ENCODE measurements at regions of chr14 and their contacts with region 1.

Region 1: GRCh38 chr14:21917699-21918436 is 244.2 kb upstream of the OR4E1 start:
- DNase-seq: peak; percentile 91
- H3K4me3 ChIP-seq: no peak overlapping the region
- H3K27ac ChIP-seq: peak overlapping the region; percentile 86
- H3K4me1 ChIP-seq: peaks cover 60% of the 10 kb centered on the region
- H3K27me3 ChIP-seq: no peaks in the 10 kb centered on the region
- CTCF ChIP-seq: peak; percentile 66 to 69
- POLR2A ChIP-seq: peak; percentile 16

Region 2: DNA sequence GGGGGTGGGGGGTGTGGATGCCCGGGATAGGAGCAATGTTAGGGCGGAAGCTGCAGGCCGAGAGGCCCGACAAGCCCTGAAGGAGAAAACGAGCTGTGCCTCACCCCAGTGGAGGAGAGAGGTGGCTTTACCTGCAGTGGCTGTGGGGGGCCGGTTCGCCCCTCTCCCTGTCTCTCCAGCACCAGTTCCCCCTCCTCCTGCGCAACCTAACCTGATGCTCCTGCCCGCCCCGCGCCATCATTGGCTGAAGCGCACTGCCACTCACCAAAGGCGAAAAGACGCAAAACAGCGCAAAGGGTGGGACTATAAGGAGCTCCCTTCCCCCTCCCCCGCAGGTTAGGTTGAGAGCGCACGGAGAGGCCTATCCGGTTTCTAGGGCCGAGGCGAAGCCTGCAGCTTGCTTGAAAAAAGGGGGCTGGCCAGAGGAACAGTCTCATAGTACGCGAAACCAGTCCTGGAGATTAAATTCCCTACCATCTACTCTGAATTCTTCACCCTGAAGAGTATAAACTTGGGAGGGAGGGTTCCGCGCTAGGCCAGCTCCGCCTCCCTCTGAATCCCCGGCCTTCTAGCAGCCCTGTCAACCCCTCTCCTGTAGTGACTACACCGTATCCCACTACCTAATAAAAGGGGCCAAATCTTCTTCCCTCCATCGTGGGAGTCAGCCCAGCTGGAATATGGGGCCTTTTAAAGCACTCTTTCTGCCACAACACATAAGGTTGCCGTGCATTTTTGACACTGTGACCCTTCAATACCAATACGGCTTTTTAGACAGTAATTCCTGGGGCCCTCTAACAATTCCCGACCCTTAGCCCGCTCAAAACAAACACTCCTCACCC is 480.6 kb before region 1 on chr14:
- CTCF ChIA-PET with region 1: no interaction called
- POLR2A ChIA-PET with region 1: no interaction called
- dilution Hi-C with region 1: no loop called
- intact Hi-C with region 1: no loop called
- DNase-seq: peak; percentile 98
- H3K4me3 ChIP-seq: peak overlapping the region; percentile 52 to 97 (median 92)
- H3K27ac ChIP-seq: peak overlapping the region; percentile 68
- H3K4me1 ChIP-seq: peaks cover 15% of the 10 kb centered on the region
- H3K27me3 ChIP-seq: no peaks in the 10 kb centered on the region
- CTCF ChIP-seq: no peak
- POLR2A ChIP-seq: peak; percentile 85

Region 3: DNA sequence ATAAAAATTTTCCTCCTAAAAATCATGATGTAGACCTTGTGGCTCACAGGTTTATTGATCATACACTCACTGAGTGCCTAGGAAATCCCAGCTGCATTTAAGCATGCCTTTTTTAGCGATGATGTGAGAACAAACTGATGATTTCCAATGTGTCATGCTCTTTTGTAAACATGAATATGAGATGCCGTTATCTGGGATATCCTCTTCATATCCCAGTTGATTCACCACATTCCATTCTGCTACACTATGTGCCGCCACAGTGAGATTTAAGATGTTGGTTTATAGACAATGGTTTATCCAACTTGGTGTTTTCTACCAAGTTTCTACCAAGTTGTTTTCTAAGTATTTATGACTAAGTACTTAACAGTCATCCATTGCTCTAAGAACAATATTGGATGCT is 249.5 kb before region 1 on chr14:
- CTCF ChIA-PET with region 1: no interaction called
- POLR2A ChIA-PET with region 1: no interaction called
- dilution Hi-C with region 1: no loop called
- intact Hi-C with region 1: no loop called
- DNase-seq: peak; percentile 64
- H3K4me3 ChIP-seq: no peak overlapping the region
- H3K27ac ChIP-seq: peak overlapping the region; percentile 13
- H3K4me1 ChIP-seq: peaks cover 10% of the 10 kb centered on the region
- H3K27me3 ChIP-seq: no peaks in the 10 kb centered on the region
- CTCF ChIP-seq: no peak
- POLR2A ChIP-seq: no peak

Region 4: GRCh38 chr14:21833836-21834235 is 84.0 kb before region 1 on chr14:
- CTCF ChIA-PET with region 1: no interaction called
- POLR2A ChIA-PET with region 1: no interaction called
- dilution Hi-C with region 1: no loop called
- intact Hi-C with region 1: no loop called
- DNase-seq: no peak
- H3K4me3 ChIP-seq: no peak overlapping the region
- H3K27ac ChIP-seq: no peak overlapping the region
- H3K4me1 ChIP-seq: no peaks in the 10 kb centered on the region
- H3K27me3 ChIP-seq: peaks cover 10 to 29% of the 10 kb centered on the region in 2 experiments
- CTCF ChIP-seq: no peak
- POLR2A ChIP-seq: no peak

Region 5: GRCh38 chr14:21852061-21852664 is 65.7 kb before region 1 on chr14:
- CTCF ChIA-PET with region 1: interaction called, 41 read pairs
- POLR2A ChIA-PET with region 1: no interaction called
- dilution Hi-C with region 1: no loop called
- intact Hi-C with region 1: no loop called
- DNase-seq: peak; percentile 58
- H3K4me3 ChIP-seq: no peak overlapping the region
- H3K27ac ChIP-seq: no peak overlapping the region
- H3K4me1 ChIP-seq: no peaks in the 10 kb centered on the region
- H3K27me3 ChIP-seq: peaks cover 20 to 37% of the 10 kb centered on the region in 2 experiments
- CTCF ChIP-seq: peak; percentile 76 to 86
- POLR2A ChIP-seq: no peak

Region 6: GRCh38 chr14:21882226-21882625 is 35.6 kb before region 1 on chr14:
- CTCF ChIA-PET with region 1: interaction called, 27 read pairs
- POLR2A ChIA-PET with region 1: no interaction called
- dilution Hi-C with region 1: no loop called
- intact Hi-C with region 1: no loop called
- DNase-seq: no peak
- H3K4me3 ChIP-seq: no peak overlapping the region
- H3K27ac ChIP-seq: no peak overlapping the region
- H3K4me1 ChIP-seq: peaks cover 6% of the 10 kb centered on the region
- H3K27me3 ChIP-seq: no peaks in the 10 kb centered on the region
- CTCF ChIP-seq: no peak
- POLR2A ChIP-seq: no peak

Region 7: GRCh38 chr14:21978184-21978998 is 60.5 kb after region 1 on chr14:
- CTCF ChIA-PET with region 1: interaction called, 74 read pairs
- POLR2A ChIA-PET with region 1: no interaction called
- dilution Hi-C with region 1: no loop called
- intact Hi-C with region 1: loop called (anchors 2 kb)
- DNase-seq: peak; percentile 41
- H3K4me3 ChIP-seq: no peak overlapping the region
- H3K27ac ChIP-seq: no peak overlapping the region
- H3K4me1 ChIP-seq: no peaks in the 10 kb centered on the region
- H3K27me3 ChIP-seq: peaks cover 7 to 10% of the 10 kb centered on the region in 2 experiments
- CTCF ChIP-seq: peak; percentile 78 to 87
- POLR2A ChIP-seq: no peak

Region 8: DNA sequence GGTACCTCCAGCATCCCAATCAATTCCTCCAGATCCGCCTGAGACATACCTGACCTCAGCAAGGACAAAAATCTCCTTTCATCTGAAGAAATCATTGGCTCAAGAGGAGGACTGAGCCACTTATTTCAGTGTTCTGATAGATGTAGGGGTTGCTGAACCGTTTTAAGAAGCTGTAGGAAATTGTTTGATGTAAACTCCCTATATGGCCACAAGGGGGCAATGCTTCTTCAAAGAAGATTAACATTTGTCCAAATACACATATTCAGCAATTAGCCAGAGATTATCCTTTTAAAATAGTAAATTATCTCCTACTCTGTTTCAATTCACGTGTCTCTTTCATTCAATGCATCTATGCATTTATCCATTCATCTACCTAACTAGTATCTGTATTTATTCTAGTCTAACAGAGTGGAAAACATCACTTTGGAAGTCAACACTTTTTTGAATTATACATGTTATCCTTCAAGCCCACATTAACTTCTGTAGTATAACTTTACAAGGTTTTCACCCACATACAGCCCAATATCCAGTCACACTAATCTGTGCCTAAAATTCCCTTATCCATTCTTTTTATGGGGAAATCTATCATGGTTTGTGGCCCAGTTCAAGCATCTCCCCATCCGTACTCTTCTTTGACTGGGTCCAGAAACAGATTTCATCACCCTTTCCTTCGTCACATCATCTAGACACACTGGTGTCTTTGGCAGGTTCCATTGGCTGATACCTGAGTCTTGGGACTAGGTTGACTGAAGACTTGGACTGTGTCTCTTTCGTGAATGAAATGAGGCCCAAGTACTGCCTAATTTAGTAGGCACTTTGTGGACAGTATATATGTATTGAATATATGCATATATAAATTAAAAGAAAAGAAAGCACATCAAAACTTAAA is 166.8 kb after region 1 on chr14:
- CTCF ChIA-PET with region 1: interaction called, 23 read pairs
- POLR2A ChIA-PET with region 1: no interaction called
- dilution Hi-C with region 1: no loop called
- intact Hi-C with region 1: loop called (anchors 2 kb)
- DNase-seq: peak; percentile 67
- H3K4me3 ChIP-seq: no peak overlapping the region
- H3K27ac ChIP-seq: no peak overlapping the region
- H3K4me1 ChIP-seq: peaks cover 4% of the 10 kb centered on the region
- H3K27me3 ChIP-seq: peaks cover 0 to under 1% of the 10 kb centered on the region in 2 experiments
- CTCF ChIP-seq: peak; percentile 47 to 60
- POLR2A ChIP-seq: no peak

Region 9: GRCh38 chr14:22314181-22314820 is 396.4 kb after region 1 on chr14:
- CTCF ChIA-PET with region 1: interaction called, 7 read pairs
- POLR2A ChIA-PET with region 1: no interaction called
- dilution Hi-C with region 1: no loop called
- intact Hi-C with region 1: loop called (anchors 10 kb)
- DNase-seq: peak; percentile 54
- H3K4me3 ChIP-seq: no peak overlapping the region
- H3K27ac ChIP-seq: no peak overlapping the region
- H3K4me1 ChIP-seq: no peaks in the 10 kb centered on the region
- H3K27me3 ChIP-seq: peaks cover 7 to 10% of the 10 kb centered on the region in 2 experiments
- CTCF ChIP-seq: peak; percentile 64 to 72
- POLR2A ChIP-seq: no peak